RWPE1 (cell line): ENCODE measurements at regions of chr5 and their contacts with region 1.

Region 1: DNA sequence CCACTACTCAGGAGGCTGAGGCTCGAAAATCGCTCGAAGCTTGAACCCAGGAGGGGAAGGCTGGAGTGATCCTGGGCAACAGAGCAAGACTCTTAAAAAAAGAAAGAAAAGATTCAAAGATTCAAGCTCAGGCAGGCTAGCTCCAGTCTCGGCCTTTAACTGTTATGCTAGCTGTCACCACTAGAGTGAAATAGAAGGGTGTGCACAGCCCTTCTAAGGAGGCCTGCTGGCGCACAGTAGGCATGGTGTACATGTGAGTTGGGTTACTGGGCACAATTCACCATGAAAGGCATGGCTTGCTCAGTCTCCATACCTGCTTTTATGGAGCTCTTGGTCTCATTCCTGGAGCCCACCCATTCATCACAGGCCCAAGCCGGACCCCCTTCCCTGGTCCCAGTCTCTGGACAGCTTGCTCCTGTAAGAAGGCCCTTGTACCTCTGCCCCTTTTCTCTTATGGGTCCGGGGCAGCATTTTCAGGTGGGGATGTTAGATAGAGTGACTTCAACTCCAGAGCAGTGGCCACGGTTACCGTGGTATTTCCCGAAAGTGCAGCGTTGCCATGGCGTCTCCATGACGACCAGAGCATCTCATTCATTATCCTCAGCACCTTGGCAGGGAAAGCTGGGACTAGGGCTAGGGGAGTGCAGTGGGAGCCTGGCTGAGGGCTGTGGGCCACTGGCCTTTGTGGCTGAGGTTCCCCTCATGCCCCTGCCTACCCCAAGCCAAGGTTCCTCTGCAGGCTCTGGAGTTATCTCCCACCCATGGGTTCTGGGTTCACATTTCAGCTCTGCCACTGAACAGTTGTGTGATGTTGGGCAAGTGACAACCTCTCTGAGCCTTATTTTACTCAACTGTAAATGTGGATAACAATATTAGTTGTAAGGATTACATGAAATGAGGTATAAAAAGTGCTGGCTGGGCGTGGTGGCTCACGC is 5.7 kb downstream of the NDST1 start:
- DNase-seq: no peak
- H3K27ac ChIP-seq: peak overlapping the region; percentile 97
- CTCF ChIP-seq: no peak

Region 2: GRCh38 chr5:150486402-150487198 is 27.0 kb before region 1 on chr5:
- CTCF ChIA-PET with region 1: interaction called, 10 read pairs
- POLR2A ChIA-PET with region 1: interaction called, 3 read pairs
- DNase-seq: peak; percentile 87
- H3K27ac ChIP-seq: peak overlapping the region; percentile 90
- CTCF ChIP-seq: no peak

Region 3: GRCh38 chr5:150642567-150642927 is 128.9 kb after region 1 on chr5:
- CTCF ChIA-PET with region 1: no interaction called
- POLR2A ChIA-PET with region 1: no interaction called
- DNase-seq: peak; percentile 97
- H3K27ac ChIP-seq: peak overlapping the region; percentile 96
- CTCF ChIP-seq: no peak